ENCODE measurements at regions of chr1 and their contacts with region 1.

Region 1: GRCh38 chr1:28886731-28887418 is 27.5 kb upstream of the EPB41 start:
- DNase-seq: peak; percentile 92
- ATAC-seq: peak; percentile 87
- H3K4me3 Mint-ChIP-seq: peak overlapping the region; percentile 84
- H3K27ac Mint-ChIP-seq: peak overlapping the region; percentile 96
- H3K4me1 Mint-ChIP-seq: peaks cover 52% of the 10 kb centered on the region
- H3K27me3 Mint-ChIP-seq: no peaks in the 10 kb centered on the region

Region 2: GRCh38 chr1:28815533-28816185 is 71.2 kb before region 1 on chr1:
- CTCF ChIA-PET with region 1: no interaction called
- DNase-seq: peak; percentile 48
- ATAC-seq: no peak
- H3K4me3 Mint-ChIP-seq: no peak overlapping the region
- H3K27ac Mint-ChIP-seq: no peak overlapping the region
- H3K4me1 Mint-ChIP-seq: peaks cover 3% of the 10 kb centered on the region
- H3K27me3 Mint-ChIP-seq: peaks cover 51% of the 10 kb centered on the region

Region 3: GRCh38 chr1:28914228-28915030 is 27.6 kb after region 1 on chr1 and contains the start of gene EPB41:
- CTCF ChIA-PET with region 1: interaction called, 10 read pairs
- DNase-seq: peak; percentile 92
- ATAC-seq: peak; percentile 91
- H3K4me3 Mint-ChIP-seq: peak within 1 kb of the TSS; percentile 96
- H3K27ac Mint-ChIP-seq: peak within 1 kb of the TSS; percentile 92
- H3K4me1 Mint-ChIP-seq: peaks cover 36% of the 10 kb centered on the region
- H3K27me3 Mint-ChIP-seq: no peaks in the 10 kb centered on the region
- total RNA-seq, gene EPB41: 73.7 to 83.8 TPM

Region 4: DNA sequence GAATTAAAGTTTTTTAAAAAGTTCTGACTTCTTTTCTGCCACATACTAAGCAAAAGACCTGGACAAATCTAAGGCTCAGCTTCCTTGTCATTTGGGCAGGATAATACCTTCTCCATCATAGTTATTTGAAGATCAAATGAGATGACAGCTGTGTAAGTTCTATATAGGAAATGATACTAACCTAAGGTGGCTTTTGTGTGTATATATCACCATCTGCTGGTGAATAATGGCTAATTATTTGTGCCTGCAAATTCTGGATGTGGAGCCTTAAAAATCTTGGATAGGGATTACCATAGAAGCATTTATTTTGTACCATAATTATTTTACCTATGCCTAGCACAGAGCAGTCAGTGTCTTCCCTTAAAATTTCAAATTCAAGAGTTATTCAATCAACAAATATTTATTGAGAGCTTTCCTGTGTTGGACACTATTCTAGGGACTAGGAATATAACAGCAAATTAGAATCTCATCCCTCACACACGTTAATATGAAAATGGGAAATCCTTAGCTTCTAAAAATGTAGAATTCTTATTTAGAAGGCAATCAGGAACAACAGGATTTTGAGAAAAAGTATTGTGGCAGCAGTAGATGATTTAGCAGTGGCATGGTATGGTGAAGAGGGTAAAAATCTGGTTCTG is 147.1 kb after region 1 on chr1:
- CTCF ChIA-PET with region 1: interaction called, 217 read pairs
- DNase-seq: no peak
- ATAC-seq: peak; percentile 63
- H3K4me3 Mint-ChIP-seq: no peak overlapping the region
- H3K27ac Mint-ChIP-seq: no peak overlapping the region
- H3K4me1 Mint-ChIP-seq: no peaks in the 10 kb centered on the region
- H3K27me3 Mint-ChIP-seq: no peaks in the 10 kb centered on the region

Region 5: DNA sequence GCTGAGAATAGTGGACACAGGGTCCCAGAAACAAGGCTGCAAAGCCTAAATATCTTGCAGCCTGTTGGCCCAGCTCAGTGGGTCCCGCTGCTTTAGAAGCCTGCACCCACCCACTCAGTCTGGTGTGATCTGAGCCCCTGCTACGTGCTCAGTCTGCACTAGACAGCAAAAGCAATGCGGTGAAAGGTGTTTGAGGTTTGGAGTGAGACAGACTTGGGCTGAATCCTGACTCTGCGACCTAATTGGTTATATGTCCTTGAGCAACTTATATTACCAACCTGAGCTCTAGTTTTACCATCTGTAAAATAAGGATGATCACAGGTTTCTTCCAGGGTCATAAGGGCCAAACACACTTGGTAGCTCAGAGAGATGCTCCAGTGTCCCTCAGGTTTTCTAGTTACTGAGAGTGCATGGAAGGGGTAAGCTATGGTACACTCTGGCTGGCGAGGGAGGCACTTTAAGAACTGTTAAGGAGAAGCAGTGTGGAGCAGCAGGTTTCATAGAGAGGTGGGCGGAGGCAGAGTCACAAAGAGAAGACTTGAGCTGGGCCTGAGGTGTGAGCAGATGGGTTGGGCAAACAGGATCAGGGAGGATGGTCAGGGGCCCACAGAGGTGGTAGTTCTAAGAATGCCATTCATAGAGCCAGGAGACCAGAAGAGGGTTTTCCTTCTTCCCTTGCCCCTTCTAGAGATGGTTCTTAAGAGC is 226.7 kb after region 1 on chr1:
- CTCF ChIA-PET with region 1: interaction called, 12 read pairs
- DNase-seq: no peak
- ATAC-seq: peak; percentile 57
- H3K4me3 Mint-ChIP-seq: no peak overlapping the region
- H3K27ac Mint-ChIP-seq: no peak overlapping the region
- H3K4me1 Mint-ChIP-seq: peaks cover 10% of the 10 kb centered on the region
- H3K27me3 Mint-ChIP-seq: no peaks in the 10 kb centered on the region

Region 6: GRCh38 chr1:29124366-29125236 is 237.7 kb after region 1 on chr1:
- CTCF ChIA-PET with region 1: interaction called, 23 read pairs
- DNase-seq: peak; percentile 77
- ATAC-seq: peak; percentile 71
- H3K4me3 Mint-ChIP-seq: peak overlapping the region; percentile 63
- H3K27ac Mint-ChIP-seq: no peak overlapping the region
- H3K4me1 Mint-ChIP-seq: peaks cover 4% of the 10 kb centered on the region
- H3K27me3 Mint-ChIP-seq: peaks cover 36% of the 10 kb centered on the region

Region 7: GRCh38 chr1:29181413-29182225 is 294.7 kb after region 1 on chr1 and contains the start of gene SRSF4:
- CTCF ChIA-PET with region 1: interaction called, 10 read pairs
- DNase-seq: peak; percentile 99
- ATAC-seq: peak; percentile 90
- H3K4me3 Mint-ChIP-seq: peak within 1 kb of the TSS; percentile 95
- H3K27ac Mint-ChIP-seq: peak within 1 kb of the TSS; percentile 97
- H3K4me1 Mint-ChIP-seq: peaks cover 44% of the 10 kb centered on the region
- H3K27me3 Mint-ChIP-seq: no peaks in the 10 kb centered on the region
- total RNA-seq, gene SRSF4: 145 to 147 TPM